ENCODE measurements at regions of chr12 and their contacts with region 1.

Region 1: GRCh38 chr12:53543539-53543938 is 36.3 kb upstream of the NPFF start:
- DNase-seq: peak; percentile 80
- H3K4me3 ChIP-seq: no peak overlapping the region
- H3K27ac ChIP-seq: peak overlapping the region; percentile 43 to 65 (median 61)
- H3K4me1 ChIP-seq: peaks cover 0 to 27% (median 14%) of the 10 kb centered on the region in 4 donors
- H3K27me3 ChIP-seq: no peaks in the 10 kb centered on the region
- CTCF ChIP-seq: peak; percentile 81 to 98 (median 94)
- EP300 ChIP-seq: no peak
- POLR2A ChIP-seq: no peak

Region 2: DNA sequence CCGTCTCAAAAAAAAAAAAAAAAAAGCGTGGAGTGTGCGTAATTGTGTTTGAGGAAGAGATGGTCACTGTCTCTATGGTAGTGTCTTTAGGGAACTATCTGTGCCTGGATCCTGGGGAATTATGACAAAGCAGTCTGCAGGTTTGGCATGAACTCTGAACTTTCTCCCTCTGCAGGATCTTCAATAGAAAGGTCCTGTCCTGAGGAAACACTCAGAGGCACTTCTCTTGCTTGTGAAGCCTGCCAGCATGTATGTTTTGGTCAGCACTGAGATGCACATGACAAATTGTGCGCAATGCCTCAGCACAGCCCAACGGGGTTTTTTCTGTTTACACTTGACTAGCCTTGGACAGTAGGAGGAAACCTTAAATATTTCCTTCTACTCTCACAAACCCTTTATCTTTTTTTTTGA is 36.0 kb after region 1 on chr12:
- intact Hi-C with region 1: no loop called
- DNase-seq: no peak
- H3K4me3 ChIP-seq: no peak overlapping the region
- H3K27ac ChIP-seq: no peak overlapping the region
- H3K4me1 ChIP-seq: peaks cover 0 to 24% (median 14%) of the 10 kb centered on the region in 4 donors
- H3K27me3 ChIP-seq: no peaks in the 10 kb centered on the region
- CTCF ChIP-seq: no peak
- EP300 ChIP-seq: no peak
- POLR2A ChIP-seq: no peak

Region 3: DNA sequence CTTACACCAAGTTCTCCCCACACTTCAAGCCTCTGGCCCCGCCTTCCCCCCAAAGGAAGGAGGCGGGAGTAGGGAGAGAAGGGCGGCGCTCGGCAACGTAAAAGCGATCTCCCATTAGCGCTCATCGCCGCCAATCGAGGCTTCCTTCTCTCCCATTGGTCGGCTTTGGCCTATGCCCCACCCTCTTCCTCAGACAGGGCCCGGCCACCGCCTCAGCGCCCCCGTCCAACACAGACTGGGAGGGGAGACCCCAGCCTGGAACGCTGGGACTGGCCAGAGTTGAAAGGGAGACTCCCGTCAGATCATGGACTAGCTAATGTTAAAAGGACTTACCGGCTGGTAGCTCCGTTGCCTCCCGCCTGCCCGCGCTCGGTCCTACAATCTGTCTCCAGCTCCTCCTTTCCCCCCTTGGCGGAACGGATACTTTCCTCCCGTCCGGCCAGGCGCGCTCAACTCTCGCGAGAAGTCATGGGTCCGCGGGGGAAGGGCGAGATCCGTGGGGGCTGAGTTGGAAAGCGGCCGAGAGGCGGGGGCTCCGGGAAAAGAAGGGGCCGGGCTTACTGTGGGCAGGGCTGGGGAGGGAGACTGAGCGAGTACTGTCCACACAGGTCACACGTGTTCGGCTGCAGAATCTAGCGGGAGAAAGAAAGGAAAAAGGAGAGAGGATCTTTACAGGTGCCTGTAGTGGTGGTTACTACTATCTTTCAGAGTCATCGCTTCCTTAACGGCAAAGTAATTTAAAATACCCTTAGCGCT is 82.6 kb after region 1 on chr12 and contains the start of gene ATF7:
- intact Hi-C with region 1: loop called (anchors 2 kb)
- DNase-seq: peak; percentile 99
- H3K4me3 ChIP-seq: peak within 1 kb of the TSS; percentile 59 to 70 (median 67)
- H3K27ac ChIP-seq: peak within 1 kb of the TSS; percentile 89 to 93 (median 90)
- H3K4me1 ChIP-seq: peaks cover 0 to 39% (median 32%) of the 10 kb centered on the region in 4 donors
- H3K27me3 ChIP-seq: no peaks in the 10 kb centered on the region
- CTCF ChIP-seq: no peak
- EP300 ChIP-seq: no peak
- POLR2A ChIP-seq: peak in 1 of 2 donors; percentile 44
- total RNA-seq, gene ATF7: 20.3 to 36.0 (median 27.1) TPM

Region 4: DNA sequence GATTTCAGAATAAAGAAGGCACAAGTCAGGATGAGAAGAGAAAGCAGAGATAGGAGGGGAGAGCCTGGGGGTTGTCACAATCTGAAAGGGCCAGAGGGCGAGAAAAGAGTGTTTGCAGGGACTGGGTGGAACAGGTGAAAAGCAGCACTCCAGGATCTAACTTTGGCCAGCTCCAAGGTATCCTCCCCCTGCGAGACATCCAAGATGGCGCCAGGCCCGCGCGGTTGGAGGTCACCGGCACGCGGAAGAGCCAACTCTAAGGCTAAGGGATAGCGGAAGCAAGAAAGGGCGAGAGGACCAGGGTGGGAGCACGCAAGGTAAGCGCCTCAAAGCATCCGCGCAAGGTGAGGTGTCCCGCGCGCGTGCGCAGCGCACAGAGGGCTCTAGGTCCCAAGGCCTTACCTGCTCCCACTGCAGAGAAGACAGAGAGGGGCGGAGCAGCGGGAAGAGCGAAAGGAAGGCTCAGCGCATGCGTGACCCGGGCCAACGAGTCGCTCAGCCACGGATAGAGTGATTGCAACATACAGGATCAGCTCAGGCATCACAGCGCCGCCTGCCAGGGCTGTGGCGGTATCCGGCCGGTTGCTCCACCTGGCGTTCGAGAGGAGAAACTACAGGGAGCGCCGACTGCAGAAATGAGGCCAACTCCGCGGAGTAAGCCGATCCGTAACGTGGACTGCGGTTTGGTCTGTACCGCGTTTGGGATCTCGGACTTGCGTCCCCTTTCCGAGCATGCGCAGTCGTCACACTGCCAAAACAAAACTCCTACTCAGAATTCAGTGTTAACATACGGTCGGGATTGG is 132.3 kb after region 1 on chr12 and contains the start of gene ATP5MC2:
- intact Hi-C with region 1: loop called (anchors 1 kb)
- DNase-seq: peak; percentile 99
- H3K4me3 ChIP-seq: peak within 1 kb of the TSS; percentile 68 to 82 (median 76)
- H3K27ac ChIP-seq: peak within 1 kb of the TSS; percentile 91 to 97 (median 94)
- H3K4me1 ChIP-seq: peaks cover 0 to 43% (median 36%) of the 10 kb centered on the region in 4 donors
- H3K27me3 ChIP-seq: no peaks in the 10 kb centered on the region
- CTCF ChIP-seq: peak; percentile 95 to 100 (median 100)
- EP300 ChIP-seq: peak in 1 of 4 donors; percentile 1
- POLR2A ChIP-seq: peak; percentile 37 to 57
- total RNA-seq, gene ATP5MC2: 409 to 571 (median 531) TPM

Region 5: DNA sequence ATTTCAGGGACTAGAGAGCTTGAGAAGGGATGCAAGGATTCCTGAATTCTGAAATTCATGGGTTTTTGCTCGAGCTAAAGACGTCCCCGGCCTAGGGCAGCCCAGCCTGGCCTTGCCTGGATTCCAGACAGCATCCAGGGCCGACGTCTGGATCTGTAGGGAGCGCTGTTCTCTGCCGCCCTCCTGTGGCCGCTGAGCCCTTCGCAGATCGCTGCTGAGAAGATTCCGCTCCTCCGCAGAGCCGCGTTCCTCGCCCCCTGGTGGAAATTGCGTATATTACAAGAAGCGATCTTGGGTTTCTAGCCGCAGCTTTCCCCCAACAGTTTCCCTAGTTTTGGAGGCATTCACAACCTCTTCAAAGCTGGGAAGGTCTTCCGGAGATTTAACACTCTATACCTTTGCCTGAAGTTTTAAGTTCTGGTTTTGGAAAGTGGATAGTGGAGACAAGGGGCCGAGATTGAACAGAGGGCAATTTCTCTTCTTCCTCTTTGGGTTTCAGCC is 203.1 kb after region 1 on chr12:
- intact Hi-C with region 1: loop called (anchors 5 kb)
- DNase-seq: peak; percentile 96
- H3K4me3 ChIP-seq: no peak overlapping the region
- H3K27ac ChIP-seq: no peak overlapping the region
- H3K4me1 ChIP-seq: peaks cover 0 to 21% (median 19%) of the 10 kb centered on the region in 4 donors
- H3K27me3 ChIP-seq: peaks cover 10 to 49% (median 33%) of the 10 kb centered on the region in 3 donors
- CTCF ChIP-seq: peak; percentile 100
- EP300 ChIP-seq: no peak
- POLR2A ChIP-seq: no peak

Measured in sigmoid colon (tissue), 7 donors.